ENCODE measurements at regions of chr12 and their contacts with region 1.

Region 1: GRCh38 chr12:110794623-110795280 is 52.0 kb upstream of the CCDC63 start:
- DNase-seq: no peak
- H3K4me3 ChIP-seq: no peak overlapping the region
- H3K27ac ChIP-seq: no peak overlapping the region
- H3K4me1 ChIP-seq: no peaks in the 10 kb centered on the region
- H3K27me3 ChIP-seq: no peaks in the 10 kb centered on the region
- CTCF ChIP-seq: no peak

Region 2: GRCh38 chr12:110606253-110606611 is 188.5 kb before region 1 on chr12:
- CTCF ChIA-PET with region 1: no interaction called
- POLR2A ChIA-PET with region 1: no interaction called
- intact Hi-C with region 1: no loop called
- DNase-seq: no peak
- H3K4me3 ChIP-seq: no peak overlapping the region
- H3K27ac ChIP-seq: no peak overlapping the region
- H3K4me1 ChIP-seq: peaks cover 8% of the 10 kb centered on the region; the same call in 1 of the 2 replicates
- H3K27me3 ChIP-seq: no peaks in the 10 kb centered on the region
- CTCF ChIP-seq: no peak

Region 3: GRCh38 chr12:110742718-110743570 is 51.8 kb before region 1 on chr12 and contains the start of gene PPP1CC:
- CTCF ChIA-PET with region 1: no interaction called
- POLR2A ChIA-PET with region 1: interaction called, 12 read pairs
- intact Hi-C with region 1: no loop called
- DNase-seq: peak; percentile 84 to 89
- H3K4me3 ChIP-seq: peak within 1 kb of the TSS; percentile 66
- H3K27ac ChIP-seq: peak within 1 kb of the TSS; percentile 70
- H3K4me1 ChIP-seq: peaks cover 48% of the 10 kb centered on the region
- H3K27me3 ChIP-seq: no peaks in the 10 kb centered on the region
- CTCF ChIP-seq: no peak
- total RNA-seq, gene PPP1CC: 149 and 170 TPM in 2 replicates